ENCODE measurements at regions of chr1 and their contacts with region 1.

Region 1: DNA sequence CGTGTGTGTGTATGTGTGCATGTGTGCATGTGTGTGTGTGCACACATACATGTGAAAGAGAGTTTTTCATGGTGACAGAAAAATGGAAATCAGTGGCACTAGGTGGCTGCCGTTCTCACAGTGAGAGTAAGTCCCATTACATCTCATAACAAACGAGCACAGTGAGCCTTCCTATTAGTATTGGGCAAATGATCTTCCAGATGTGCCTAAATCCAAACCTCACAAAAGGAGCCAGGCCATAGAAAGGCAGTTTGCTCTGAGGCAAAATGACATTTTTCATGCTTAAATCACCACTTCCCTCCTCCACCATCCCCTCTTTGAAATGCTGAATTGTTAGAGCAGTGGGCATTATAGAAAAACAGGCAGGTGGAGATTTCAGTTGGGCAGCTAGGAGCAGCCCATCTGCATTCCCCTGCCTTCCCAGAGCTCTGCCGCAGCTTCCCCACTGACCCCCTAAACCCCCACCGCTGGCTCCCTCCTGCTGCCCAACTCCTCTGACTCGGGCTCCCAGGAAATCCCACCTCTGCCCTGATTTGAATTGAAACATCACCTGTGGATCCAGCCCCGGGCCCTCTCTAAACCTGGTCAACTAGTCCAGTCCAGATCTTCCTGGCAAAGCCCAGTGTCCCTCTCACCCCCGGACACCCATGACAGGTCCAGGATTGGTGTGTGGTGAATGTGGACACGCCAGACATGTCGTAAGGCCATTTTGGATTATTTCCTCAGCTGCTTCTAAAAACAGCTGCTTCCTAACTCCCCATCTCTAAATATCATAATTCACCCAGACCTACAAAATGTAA is 190.5 kb downstream of the SEC16B start:
- DNase-seq: no peak
- ATAC-seq: no peak
- H3K4me3 ChIP-seq: no peak overlapping the region
- H3K4me3 Mint-ChIP-seq: no peak overlapping the region
- H3K27ac ChIP-seq: no peak overlapping the region
- H3K27ac Mint-ChIP-seq: no peak overlapping the region
- H3K4me1 ChIP-seq: no peaks in the 10 kb centered on the region
- H3K4me1 Mint-ChIP-seq: no peaks in the 10 kb centered on the region
- H3K27me3 ChIP-seq: no peaks in the 10 kb centered on the region
- H3K27me3 Mint-ChIP-seq: peaks cover 0 to 3% (median 0%) of the 10 kb centered on the region in 5 donors

Region 2: GRCh38 chr1:177798614-177799013 is 19.2 kb after region 1 on chr1:
- CTCF ChIA-PET with region 1: no interaction called
- POLR2A ChIA-PET with region 1: no interaction called
- intact Hi-C with region 1: loop called in 1 of 2 experiments (anchors 2 kb)
- DNase-seq: no peak
- ATAC-seq: no peak
- H3K4me3 ChIP-seq: no peak overlapping the region
- H3K4me3 Mint-ChIP-seq: no peak overlapping the region
- H3K27ac ChIP-seq: no peak overlapping the region
- H3K27ac Mint-ChIP-seq: no peak overlapping the region
- H3K4me1 ChIP-seq: no peaks in the 10 kb centered on the region
- H3K4me1 Mint-ChIP-seq: peaks cover 0 to 4% (median 0%) of the 10 kb centered on the region in 7 donors
- H3K27me3 ChIP-seq: no peaks in the 10 kb centered on the region
- H3K27me3 Mint-ChIP-seq: peaks cover 0 to 6% (median 0%) of the 10 kb centered on the region in 5 donors

Measured in naive thymus-derived CD4-positive, alpha-beta T cell (primary cell).